CD4-positive, alpha-beta T cell (primary cell): ENCODE measurements at regions of chr15 and their contacts with region 1.

Region 1: DNA sequence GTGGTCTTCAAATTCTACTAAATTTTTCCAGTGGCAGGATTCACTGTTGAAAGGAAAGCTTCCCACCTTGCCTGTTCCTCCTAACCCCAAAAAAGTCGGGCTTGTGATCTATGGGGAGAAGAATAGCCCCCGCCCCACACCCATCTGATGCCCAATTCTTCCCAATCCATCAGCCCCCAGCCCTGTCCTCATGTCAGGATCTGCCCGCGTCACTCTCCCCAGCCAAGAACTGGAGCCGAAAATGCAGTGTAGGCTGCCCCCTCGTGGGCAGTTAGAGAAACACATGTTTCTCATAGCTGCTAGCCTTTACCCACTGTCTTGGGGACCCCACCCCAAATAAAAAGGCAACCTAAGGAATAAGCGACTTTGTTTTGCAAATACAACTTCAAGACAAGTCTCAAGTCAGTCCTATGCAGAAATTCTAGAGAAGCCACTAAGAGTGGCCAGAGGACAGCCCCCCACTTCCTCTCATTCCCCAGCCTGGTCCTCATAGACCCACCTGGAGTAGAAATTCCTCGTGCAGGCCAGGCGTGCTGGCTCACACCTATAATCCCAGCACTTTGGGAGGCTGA is 13.0 kb upstream of the CSK start:
- DNase-seq: peak in 13 of 14 experiments; percentile 46 to 82 (median 59)
- ATAC-seq: peak; percentile 63
- H3K4me3 ChIP-seq: no peak overlapping the region
- H3K4me3 Mint-ChIP-seq: no peak overlapping the region
- H3K27ac ChIP-seq: no peak overlapping the region
- H3K27ac Mint-ChIP-seq: no peak overlapping the region
- H3K4me1 ChIP-seq: peaks cover 31% of the 10 kb centered on the region
- H3K4me1 Mint-ChIP-seq: peaks cover 28% of the 10 kb centered on the region
- H3K27me3 ChIP-seq: no peaks in the 10 kb centered on the region
- H3K27me3 Mint-ChIP-seq: peaks cover 9% of the 10 kb centered on the region
- CTCF ChIP-seq: peak; percentile 85

Region 2: DNA sequence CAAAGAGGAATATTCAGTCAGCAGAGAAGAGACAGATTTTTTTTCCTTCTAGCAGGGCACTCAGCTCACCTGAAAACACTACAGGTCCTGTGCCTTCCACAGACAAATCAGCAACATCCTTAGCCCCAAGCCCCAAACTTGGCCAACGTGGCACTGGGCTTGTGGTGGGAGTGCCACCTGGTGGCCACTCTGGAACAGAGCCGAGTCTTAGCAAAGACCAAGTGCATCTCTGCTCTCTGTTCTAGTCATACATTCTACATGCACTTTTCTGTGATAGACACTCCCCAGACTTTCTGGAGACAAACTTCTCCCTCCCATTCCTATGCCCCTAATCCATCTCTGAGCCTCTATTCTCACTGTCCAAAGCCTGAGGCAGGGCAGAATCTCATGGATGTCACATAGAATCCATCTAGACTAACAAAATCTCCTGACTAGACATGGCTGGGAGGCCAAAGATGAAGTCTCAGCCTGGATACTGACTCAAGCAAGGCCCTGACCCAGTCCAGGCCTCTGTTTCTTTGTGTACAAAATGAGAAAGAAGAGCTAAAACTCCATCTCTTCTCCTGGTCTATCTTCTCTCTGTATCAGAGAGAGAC is 330.0 kb before region 1 on chr15:
- CTCF ChIA-PET with region 1: no interaction called
- POLR2A ChIA-PET with region 1: no interaction called
- intact Hi-C with region 1: loop called in 1 of 2 experiments (anchors 10 kb)
- DNase-seq: peak; percentile 59 to 86 (median 69)
- ATAC-seq: peak; percentile 84
- H3K4me3 ChIP-seq: no peak overlapping the region
- H3K4me3 Mint-ChIP-seq: peak overlapping the region; percentile 38
- H3K27ac ChIP-seq: no peak overlapping the region
- H3K27ac Mint-ChIP-seq: no peak overlapping the region
- H3K4me1 ChIP-seq: peaks cover 13% of the 10 kb centered on the region
- H3K4me1 Mint-ChIP-seq: peaks cover 16% of the 10 kb centered on the region
- H3K27me3 ChIP-seq: no peaks in the 10 kb centered on the region
- H3K27me3 Mint-ChIP-seq: no peaks in the 10 kb centered on the region
- CTCF ChIP-seq: peak; percentile 82

Region 3: DNA sequence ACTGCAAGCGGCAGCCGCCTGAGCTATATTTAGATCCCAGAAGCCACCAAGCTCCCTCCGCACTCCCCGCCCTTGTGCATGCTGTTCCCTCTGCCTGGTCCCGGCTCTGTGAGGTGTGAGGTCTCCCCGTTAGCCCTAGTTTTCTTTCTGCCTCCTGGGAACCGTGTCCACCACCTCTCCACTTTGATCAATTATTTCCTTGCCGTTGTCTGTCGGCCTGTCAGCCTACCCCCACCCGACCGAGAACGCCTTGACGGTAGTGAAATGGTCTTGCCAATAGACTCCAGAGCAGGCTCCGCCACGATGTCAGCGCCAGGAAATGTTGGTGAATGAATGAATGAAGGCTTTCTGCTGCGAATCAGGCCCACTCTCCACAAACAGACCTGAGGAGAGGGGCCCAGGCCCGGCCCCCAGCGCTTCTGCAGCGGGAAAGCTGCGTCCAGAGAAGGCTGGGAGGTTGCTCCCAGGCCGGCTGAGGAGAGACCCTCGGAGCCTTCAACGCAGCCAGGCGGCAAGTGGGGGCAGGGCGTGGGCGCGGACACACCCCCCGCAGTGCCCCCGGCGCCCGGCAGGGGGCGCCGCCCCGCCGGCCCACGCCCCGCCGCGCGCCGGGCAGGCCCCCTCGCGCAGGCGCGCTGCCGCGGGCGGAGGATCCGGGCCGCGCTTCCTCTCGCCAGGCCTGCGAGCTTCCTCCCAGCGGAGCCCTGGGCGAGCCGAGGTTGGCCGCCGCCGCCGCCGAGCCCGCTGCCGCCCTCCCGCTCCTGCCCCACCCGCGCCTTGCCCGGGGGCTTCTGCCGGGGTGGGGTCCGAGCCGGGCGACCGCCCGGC is 12.8 kb after region 1 on chr15 and contains the start of gene CSK:
- CTCF ChIA-PET with region 1: interaction called, 353 read pairs
- POLR2A ChIA-PET with region 1: interaction called, 925 read pairs
- intact Hi-C with region 1: loop called in 1 of 2 experiments (anchors 1 kb)
- DNase-seq: peak; percentile 59 to 94 (median 80)
- ATAC-seq: peak; percentile 59
- H3K4me3 ChIP-seq: peak within 1 kb of the TSS; percentile 100
- H3K4me3 Mint-ChIP-seq: peak within 1 kb of the TSS; percentile 90
- H3K27ac ChIP-seq: peak within 1 kb of the TSS; percentile 84 to 93
- H3K27ac Mint-ChIP-seq: peak within 1 kb of the TSS; percentile 94
- H3K4me1 ChIP-seq: peaks cover 88% of the 10 kb centered on the region
- H3K4me1 Mint-ChIP-seq: peaks cover 65% of the 10 kb centered on the region
- H3K27me3 ChIP-seq: no peaks in the 10 kb centered on the region
- H3K27me3 Mint-ChIP-seq: no peaks in the 10 kb centered on the region
- CTCF ChIP-seq: peak; percentile 59
- total RNA-seq, gene CSK: 114 to 118 TPM

Region 4: GRCh38 chr15:74799856-74800547 is 31.1 kb after region 1 on chr15:
- CTCF ChIA-PET with region 1: interaction called, 353 read pairs
- POLR2A ChIA-PET with region 1: interaction called, 925 read pairs
- intact Hi-C with region 1: loop called (anchors 1 kb)
- DNase-seq: peak; percentile 78 to 94 (median 87)
- ATAC-seq: peak; percentile 94
- H3K4me3 ChIP-seq: no peak overlapping the region
- H3K4me3 Mint-ChIP-seq: peak overlapping the region; percentile 34
- H3K27ac ChIP-seq: peak overlapping the region; percentile 85 to 90
- H3K27ac Mint-ChIP-seq: peak overlapping the region; percentile 93
- H3K4me1 ChIP-seq: peaks cover 60% of the 10 kb centered on the region
- H3K4me1 Mint-ChIP-seq: peaks cover 50% of the 10 kb centered on the region
- H3K27me3 ChIP-seq: no peaks in the 10 kb centered on the region
- H3K27me3 Mint-ChIP-seq: no peaks in the 10 kb centered on the region
- CTCF ChIP-seq: peak; percentile 94

Region 5: GRCh38 chr15:74885461-74885860 is 116.6 kb after region 1 on chr15:
- CTCF ChIA-PET with region 1: no interaction called
- POLR2A ChIA-PET with region 1: no interaction called
- intact Hi-C with region 1: no loop called
- DNase-seq: no peak
- ATAC-seq: no peak
- H3K4me3 ChIP-seq: no peak overlapping the region
- H3K4me3 Mint-ChIP-seq: no peak overlapping the region
- H3K27ac ChIP-seq: no peak overlapping the region
- H3K27ac Mint-ChIP-seq: no peak overlapping the region
- H3K4me1 ChIP-seq: peaks cover 30% of the 10 kb centered on the region
- H3K4me1 Mint-ChIP-seq: peaks cover 15% of the 10 kb centered on the region
- H3K27me3 ChIP-seq: no peaks in the 10 kb centered on the region
- H3K27me3 Mint-ChIP-seq: no peaks in the 10 kb centered on the region
- CTCF ChIP-seq: no peak

Region 6: DNA sequence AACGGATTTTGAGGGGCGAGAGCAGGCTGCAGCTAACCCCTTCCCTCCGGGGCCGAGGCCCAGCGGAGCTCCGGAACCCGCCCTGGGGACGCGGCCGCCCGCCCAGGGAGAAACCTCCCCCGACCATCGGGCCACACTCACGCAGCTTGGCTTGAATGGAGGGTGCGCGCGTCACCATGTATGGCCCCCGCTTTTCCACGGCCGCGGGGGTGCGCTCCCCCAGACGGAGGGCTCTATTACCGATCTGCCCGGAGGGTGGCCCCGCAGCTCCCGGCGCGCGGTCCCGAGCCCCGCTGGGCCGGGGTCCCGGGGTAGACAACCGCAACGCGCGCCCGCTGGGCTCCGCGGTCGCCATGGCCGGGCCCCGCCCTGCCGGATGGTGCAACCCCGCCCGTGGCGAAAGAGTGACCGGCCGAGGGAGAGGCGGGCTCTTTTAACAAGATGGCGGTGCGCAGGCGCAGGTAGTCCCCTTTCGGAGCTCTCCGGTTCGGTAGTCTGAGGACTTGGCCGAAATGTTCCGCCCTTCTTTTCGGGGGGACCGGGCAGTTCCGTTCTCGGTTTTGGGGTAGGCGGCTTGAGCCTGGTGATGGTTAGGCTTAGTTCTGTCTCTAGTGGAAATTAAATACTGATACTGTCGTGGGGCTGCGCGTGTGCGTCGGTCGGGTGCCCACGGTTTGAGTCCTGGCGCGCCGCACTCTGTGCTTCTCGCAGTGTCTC is 137.7 kb after region 1 on chr15 and contains the start of gene FAM219B:
- CTCF ChIA-PET with region 1: interaction called, 11 read pairs
- POLR2A ChIA-PET with region 1: interaction called, 11 read pairs
- intact Hi-C with region 1: loop called in 1 of 2 experiments (anchors 2 kb)
- DNase-seq: peak; percentile 42 to 86 (median 64)
- ATAC-seq: peak; percentile 72
- H3K4me3 ChIP-seq: peak within 1 kb of the TSS; percentile 95
- H3K4me3 Mint-ChIP-seq: peak within 1 kb of the TSS; percentile 99
- H3K27ac ChIP-seq: peak within 1 kb of the TSS; percentile 68 to 80
- H3K27ac Mint-ChIP-seq: peak within 1 kb of the TSS; percentile 99
- H3K4me1 ChIP-seq: peaks cover 38% of the 10 kb centered on the region
- H3K4me1 Mint-ChIP-seq: peaks cover 42% of the 10 kb centered on the region
- H3K27me3 ChIP-seq: no peaks in the 10 kb centered on the region
- H3K27me3 Mint-ChIP-seq: no peaks in the 10 kb centered on the region
- CTCF ChIP-seq: no peak
- total RNA-seq, gene FAM219B: 21.5 to 26.8 TPM

Region 7: DNA sequence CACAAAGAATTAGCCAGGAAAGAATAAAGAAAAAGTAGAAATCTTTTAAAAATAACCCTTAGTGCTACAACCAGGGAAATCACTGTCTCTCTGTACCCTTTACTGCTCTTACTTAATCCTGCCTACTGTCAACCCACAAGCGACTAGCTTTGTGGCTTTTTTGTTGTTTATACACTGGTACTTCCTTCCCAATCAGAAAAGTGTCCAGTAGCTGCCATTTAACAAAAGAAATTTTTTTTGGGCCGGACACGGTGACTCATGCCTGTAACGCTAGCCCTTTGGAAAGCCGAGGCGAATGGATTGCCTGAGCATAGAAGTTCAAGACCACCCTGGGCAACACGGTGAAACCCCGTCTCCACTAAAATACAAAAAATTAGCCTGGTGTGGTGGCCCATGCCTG is 151.6 kb after region 1 on chr15:
- CTCF ChIA-PET with region 1: no interaction called
- POLR2A ChIA-PET with region 1: no interaction called
- intact Hi-C with region 1: no loop called
- DNase-seq: no peak
- ATAC-seq: no peak
- H3K4me3 ChIP-seq: no peak overlapping the region
- H3K4me3 Mint-ChIP-seq: no peak overlapping the region
- H3K27ac ChIP-seq: no peak overlapping the region
- H3K27ac Mint-ChIP-seq: no peak overlapping the region
- H3K4me1 ChIP-seq: no peaks in the 10 kb centered on the region
- H3K4me1 Mint-ChIP-seq: no peaks in the 10 kb centered on the region
- H3K27me3 ChIP-seq: no peaks in the 10 kb centered on the region
- H3K27me3 Mint-ChIP-seq: no peaks in the 10 kb centered on the region
- CTCF ChIP-seq: no peak